ENCODE measurements at regions of chr1 and their contacts with region 1.

Region 1: GRCh38 chr1:70517444-70517843 is 106.4 kb downstream of the CTH start:
- DNase-seq: no peak
- H3K4me3 ChIP-seq: no peak overlapping the region
- CTCF ChIP-seq: no peak

Region 2: DNA sequence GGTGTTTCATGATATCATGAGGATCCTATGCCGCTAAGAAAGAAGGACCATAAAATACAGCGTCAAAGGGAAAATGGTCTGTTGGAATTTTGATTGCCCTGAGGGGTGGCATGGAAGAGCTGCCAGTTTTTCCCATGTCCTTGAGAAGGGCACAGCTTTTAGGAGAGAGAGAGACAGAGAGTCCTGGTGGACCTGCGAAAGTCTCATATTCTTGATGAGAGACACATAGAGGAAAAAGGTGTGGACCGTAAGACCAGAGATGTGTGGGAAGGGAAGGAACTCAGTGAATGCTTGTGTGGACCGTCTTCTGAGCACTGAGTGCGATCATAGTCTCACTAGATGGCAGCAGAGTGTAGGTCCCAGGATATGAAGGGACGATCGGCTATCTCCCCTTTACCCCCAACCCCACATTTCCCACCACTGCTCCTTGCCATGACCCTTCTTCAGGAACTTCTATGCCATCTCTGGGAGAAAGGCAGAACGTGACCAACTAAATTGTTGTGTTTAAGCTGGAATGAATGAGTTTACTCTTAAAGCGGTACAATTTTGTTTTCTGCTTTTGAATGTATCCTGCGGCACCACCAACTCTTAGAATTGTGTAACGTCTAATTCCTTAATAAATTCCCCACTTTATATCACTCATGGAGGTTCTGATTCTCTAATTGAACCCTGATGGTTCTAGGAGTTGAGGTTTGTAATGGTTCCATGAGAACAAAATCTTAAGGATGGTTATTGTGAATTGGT is 11.3 kb after region 1 on chr1:
- CTCF ChIA-PET with region 1: interaction called, 11 read pairs
- POLR2A ChIA-PET with region 1: no interaction called
- DNase-seq: no peak
- H3K4me3 ChIP-seq: no peak overlapping the region
- CTCF ChIP-seq: peak; percentile 78